Heart right ventricle (tissue), 16 donors: ENCODE measurements at regions of chr6 and their contacts with region 1.

Region 1: DNA sequence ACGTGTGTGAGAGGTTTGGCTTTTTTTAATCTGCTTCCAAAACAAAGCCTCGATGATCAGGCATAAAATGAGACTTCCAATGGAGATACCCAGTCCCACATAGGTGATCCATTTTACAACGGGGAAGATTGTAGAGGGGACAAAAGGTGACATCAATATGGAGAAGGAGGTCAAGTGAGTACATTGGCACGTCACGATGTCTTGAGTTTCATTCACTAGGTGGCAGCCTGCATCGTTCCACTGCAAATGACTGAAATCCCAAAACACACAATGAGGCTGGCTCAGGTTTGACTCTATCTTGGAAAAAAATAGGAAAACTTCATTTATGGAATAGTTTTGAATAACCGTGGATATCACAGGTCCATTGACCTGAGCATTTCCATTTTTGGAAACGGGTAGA is 32.6 kb downstream of the ADGRF1 start:
- DNase-seq: no peak
- ATAC-seq: no peak
- H3K4me3 ChIP-seq: no peak overlapping the region
- H3K27ac ChIP-seq: no peak overlapping the region
- H3K4me1 ChIP-seq: no peaks in the 10 kb centered on the region
- H3K27me3 ChIP-seq: peaks cover 0 to 12% (median 0%) of the 10 kb centered on the region in 7 donors
- CTCF ChIP-seq: peak in 4 of 9 donors; percentile 9 to 43 (median 24)

Region 2: GRCh38 chr6:47047479-47048407 is 38.2 kb after region 1 on chr6:
- intact Hi-C with region 1: loop called in 1 of 10 experiments (anchors 5 kb)
- DNase-seq: peak in 1 of 2 donors; percentile 56
- ATAC-seq: peak; percentile 78 to 94 (median 92)
- H3K4me3 ChIP-seq: no peak overlapping the region
- H3K27ac ChIP-seq: peak overlapping the region in 3 of 10 donors; percentile 36 to 54 (median 49)
- H3K4me1 ChIP-seq: peaks cover 0 to 25% (median 9%) of the 10 kb centered on the region in 9 donors
- H3K27me3 ChIP-seq: no peaks in the 10 kb centered on the region
- CTCF ChIP-seq: peak; percentile 65 to 90 (median 78)

Region 3: GRCh38 chr6:47334334-47334733 is 324.8 kb after region 1 on chr6:
- intact Hi-C with region 1: no loop called
- DNase-seq: no peak
- ATAC-seq: no peak
- H3K4me3 ChIP-seq: no peak overlapping the region
- H3K27ac ChIP-seq: no peak overlapping the region
- H3K4me1 ChIP-seq: peaks cover 0 to 7% (median 0%) of the 10 kb centered on the region in 9 donors
- H3K27me3 ChIP-seq: no peaks in the 10 kb centered on the region
- CTCF ChIP-seq: no peak